Posterior cingulate gyrus (tissue), 11 donors: ENCODE measurements at regions of chr16 and their contacts with region 1.

Region 1: GRCh38 chr16:84484579-84485254 is 19.7 kb downstream of the MEAK7 start:
- DNase-seq: peak; percentile 53 to 96 (median 82)

Region 2: GRCh38 chr16:84084570-84085270 is 400.0 kb before region 1 on chr16:
- intact Hi-C with region 1: loop called (anchors 10 kb)
- DNase-seq: peak in 5 of 10 donors; percentile 38 to 91 (median 49)

Region 3: DNA sequence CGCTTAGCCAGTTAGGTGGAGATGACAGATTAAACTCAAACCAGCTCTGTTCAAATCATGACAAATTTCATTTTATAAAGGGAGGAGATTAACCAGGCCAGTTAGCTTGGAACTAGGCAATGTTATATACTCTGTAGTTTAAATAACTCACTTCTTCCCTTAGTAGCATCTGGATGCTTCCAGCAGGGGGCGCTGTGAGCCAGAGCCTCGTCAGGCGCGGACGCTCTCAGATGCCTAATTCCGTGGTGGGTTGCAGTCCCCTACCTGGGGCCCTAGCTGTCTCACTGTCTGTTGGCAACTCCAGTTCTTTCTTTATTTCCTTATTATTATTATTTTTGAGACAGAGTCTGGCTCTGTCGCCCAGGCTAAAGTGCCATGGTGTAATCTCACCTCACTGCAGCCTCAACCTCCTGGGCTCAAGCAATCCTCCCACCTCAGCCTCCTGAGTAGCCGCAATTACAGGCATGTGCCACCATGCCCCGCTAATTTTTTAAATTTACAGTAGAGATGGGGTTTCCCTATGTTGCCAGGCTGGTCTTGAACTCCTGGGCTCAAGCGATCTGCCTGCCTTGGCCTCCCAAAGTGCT is 207.4 kb before region 1 on chr16:
- intact Hi-C with region 1: loop called (anchors 1 kb)
- DNase-seq: peak; percentile 46 to 96 (median 80)

Region 4: DNA sequence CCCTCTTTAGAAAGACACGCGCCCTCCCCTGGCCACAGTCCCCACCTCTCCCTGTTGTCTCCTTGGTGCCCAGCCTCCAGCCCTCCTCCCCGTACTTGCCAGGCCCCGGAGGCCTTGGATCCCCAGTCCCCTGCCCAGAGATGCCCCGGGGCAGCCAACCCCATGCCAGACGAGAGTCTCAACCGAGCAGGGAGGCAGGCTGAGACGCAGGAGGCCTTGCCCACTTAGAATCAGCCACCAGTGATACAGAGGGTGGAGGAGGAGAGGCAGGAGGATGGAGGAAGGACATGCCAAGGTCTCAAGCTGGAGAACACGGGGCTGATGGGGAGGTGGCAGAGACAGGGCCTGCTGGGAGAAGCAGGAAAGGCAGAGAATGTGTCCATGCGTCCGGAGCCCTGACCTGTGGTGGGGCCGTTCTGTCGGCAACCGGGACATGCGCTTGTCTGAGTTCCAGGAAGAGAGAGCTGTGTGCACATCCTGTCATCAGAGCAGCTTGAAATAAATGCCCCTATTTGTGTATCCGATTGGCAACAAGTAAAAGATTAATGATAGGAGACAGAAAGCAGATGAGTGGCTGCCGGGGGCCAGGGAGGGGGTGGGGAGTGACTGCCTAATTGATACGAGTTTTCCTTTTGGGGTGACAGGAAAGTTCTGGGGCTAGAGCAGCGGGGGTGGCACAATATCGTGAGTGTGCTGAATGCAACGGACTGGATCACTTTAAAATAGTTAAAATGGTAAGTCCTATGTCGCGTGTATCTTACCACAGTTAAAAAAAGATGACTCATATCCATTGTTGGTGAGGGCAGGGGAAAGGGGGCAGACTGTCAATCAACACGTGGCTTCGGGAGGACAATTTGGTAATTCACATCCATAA is 64.5 kb after region 1 on chr16:
- intact Hi-C with region 1: no loop called
- DNase-seq: peak in 3 of 10 donors; percentile 16 to 81 (median 71)